GM13977 (cell line): ENCODE measurements at regions of chr11 and their contacts with region 1.

Region 1: GRCh38 chr11:67262731-67263675 is 3.3 kb upstream of the GRK2 start:
- DNase-seq: peak; percentile 93
- CTCF ChIP-seq: peak; percentile 92

Region 2: DNA sequence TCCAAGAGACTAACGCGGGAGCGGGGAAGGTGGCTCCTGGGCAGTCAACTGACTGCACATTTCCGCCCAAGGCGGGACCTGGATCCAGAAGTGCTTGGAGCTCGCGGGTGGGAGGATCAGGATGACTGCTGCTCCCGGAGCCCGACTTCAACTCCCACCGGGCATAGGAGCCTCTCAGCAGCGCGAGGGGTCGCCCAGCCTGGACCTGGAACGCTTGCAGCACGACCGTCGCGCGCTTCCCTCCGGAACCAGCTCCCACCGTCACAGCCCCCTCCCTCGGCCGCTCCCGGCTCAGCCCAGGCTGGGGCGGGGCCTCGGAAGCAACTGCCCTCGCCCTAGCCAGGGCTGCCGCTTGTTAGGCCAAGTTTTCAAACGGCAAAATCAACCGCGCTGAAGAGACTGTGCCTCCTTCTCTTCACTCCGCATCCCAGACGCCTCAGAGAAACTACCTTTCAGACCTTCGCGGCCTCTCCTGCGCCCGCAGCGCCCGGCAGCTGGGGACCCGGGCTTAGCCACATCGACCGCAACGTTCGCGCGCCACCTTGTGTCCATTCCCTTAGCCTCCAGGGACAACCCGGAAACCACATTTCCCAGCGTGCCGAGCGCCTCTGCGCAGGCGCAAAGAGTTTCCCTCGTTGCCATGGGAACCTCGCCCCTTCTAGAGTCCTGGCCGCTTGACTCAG is 54.3 kb after region 1 on chr11:
- in situ Hi-C with region 1: loop called (anchors 5 kb)
- DNase-seq: peak; percentile 100
- CTCF ChIP-seq: peak; percentile 92